B cell (primary cell): ENCODE measurements at regions of chr11 and their contacts with region 1.

Region 1: DNA sequence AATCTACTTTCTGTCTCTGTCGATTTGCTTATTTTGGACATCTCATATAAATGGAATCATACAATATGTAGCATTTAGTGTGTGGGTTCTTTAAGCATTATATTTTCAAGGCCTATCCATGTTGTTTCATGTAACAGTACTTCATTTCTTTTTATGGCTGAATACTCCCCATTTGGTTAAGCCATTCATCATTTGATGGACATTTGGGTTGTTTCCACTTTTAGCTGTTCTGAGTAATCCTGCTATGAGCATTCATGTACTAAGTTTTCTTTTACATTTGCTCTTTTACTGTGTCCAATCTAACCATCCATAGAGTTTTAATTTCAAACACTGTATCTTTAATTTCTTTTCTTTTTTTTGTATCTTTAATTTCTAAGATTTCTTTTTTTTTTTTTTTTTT is 55.6 kb upstream of the SPTBN2 start:
- DNase-seq: no peak
- ATAC-seq: no peak
- H3K4me3 ChIP-seq: no peak overlapping the region
- H3K4me3 Mint-ChIP-seq: no peak overlapping the region
- H3K27ac ChIP-seq: no peak overlapping the region
- H3K27ac Mint-ChIP-seq: no peak overlapping the region
- H3K4me1 ChIP-seq: no peaks in the 10 kb centered on the region
- H3K4me1 Mint-ChIP-seq: peaks cover 2% of the 10 kb centered on the region
- H3K27me3 ChIP-seq: no peaks in the 10 kb centered on the region
- H3K27me3 Mint-ChIP-seq: no peaks in the 10 kb centered on the region
- CTCF ChIP-seq: no peak

Region 2: GRCh38 chr11:66768088-66768521 is 16.5 kb before region 1 on chr11:
- CTCF ChIA-PET with region 1: interaction called, 3 read pairs
- POLR2A ChIA-PET with region 1: no interaction called
- intact Hi-C with region 1: loop called (anchors 1 kb)
- DNase-seq: no peak
- ATAC-seq: no peak
- H3K4me3 ChIP-seq: no peak overlapping the region
- H3K4me3 Mint-ChIP-seq: no peak overlapping the region
- H3K27ac ChIP-seq: no peak overlapping the region
- H3K27ac Mint-ChIP-seq: no peak overlapping the region
- H3K4me1 ChIP-seq: peaks cover 3 to 4% of the 10 kb centered on the region in 2 donors
- H3K4me1 Mint-ChIP-seq: peaks cover 4% of the 10 kb centered on the region
- H3K27me3 ChIP-seq: no peaks in the 10 kb centered on the region
- H3K27me3 Mint-ChIP-seq: no peaks in the 10 kb centered on the region
- CTCF ChIP-seq: no peak

Region 3: GRCh38 chr11:66842896-66843775 is 58.6 kb after region 1 on chr11 and contains the start of gene RCE1:
- CTCF ChIA-PET with region 1: no interaction called
- POLR2A ChIA-PET with region 1: no interaction called
- intact Hi-C with region 1: no loop called
- DNase-seq: peak; percentile 96
- ATAC-seq: peak; percentile 91
- H3K4me3 ChIP-seq: peak within 1 kb of the TSS; percentile 74 to 100 (median 95)
- H3K4me3 Mint-ChIP-seq: peak within 1 kb of the TSS; percentile 90
- H3K27ac ChIP-seq: peak within 1 kb of the TSS; percentile 98 to 99
- H3K27ac Mint-ChIP-seq: peak within 1 kb of the TSS; percentile 94
- H3K4me1 ChIP-seq: peaks cover 28 to 37% of the 10 kb centered on the region in 2 donors
- H3K4me1 Mint-ChIP-seq: peaks cover 43% of the 10 kb centered on the region
- H3K27me3 ChIP-seq: no peaks in the 10 kb centered on the region
- H3K27me3 Mint-ChIP-seq: no peaks in the 10 kb centered on the region
- CTCF ChIP-seq: no peak
- total RNA-seq, gene RCE1: 31.6 and 34.3 TPM in 2 replicates

Region 4: GRCh38 chr11:66868726-66869566 is 84.4 kb after region 1 on chr11:
- CTCF ChIA-PET with region 1: no interaction called
- POLR2A ChIA-PET with region 1: no interaction called
- intact Hi-C with region 1: no loop called
- DNase-seq: peak; percentile 89
- ATAC-seq: peak; percentile 98
- H3K4me3 ChIP-seq: peak overlapping the region in 2 of 5 experiments; percentile 19 to 20
- H3K4me3 Mint-ChIP-seq: peak overlapping the region; percentile 23
- H3K27ac ChIP-seq: no peak overlapping the region
- H3K27ac Mint-ChIP-seq: peak overlapping the region; percentile 39
- H3K4me1 ChIP-seq: peaks cover 4 to 10% of the 10 kb centered on the region in 2 donors
- H3K4me1 Mint-ChIP-seq: peaks cover 16% of the 10 kb centered on the region
- H3K27me3 ChIP-seq: no peaks in the 10 kb centered on the region
- H3K27me3 Mint-ChIP-seq: no peaks in the 10 kb centered on the region
- CTCF ChIP-seq: peak; percentile 89

Region 5: DNA sequence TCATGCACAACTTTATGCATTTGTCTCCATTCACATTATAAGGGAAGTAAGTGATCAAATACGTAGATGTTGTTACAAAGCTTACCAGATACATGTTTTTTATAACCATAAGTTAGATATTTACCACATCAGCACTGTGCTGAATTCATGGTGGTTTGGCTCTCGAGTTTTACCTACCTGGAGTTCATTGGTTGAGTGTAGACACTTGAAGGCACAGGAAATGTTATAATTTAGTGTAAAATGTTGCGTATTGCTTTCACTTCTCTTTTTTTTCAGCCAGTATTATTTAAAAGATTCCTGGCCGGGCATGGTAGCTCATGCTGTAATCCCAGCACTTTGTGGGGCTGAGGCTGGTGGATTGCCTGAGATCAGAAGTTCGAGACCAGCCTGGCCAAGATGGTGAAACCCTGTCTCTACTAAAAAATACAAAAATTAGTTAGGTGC is 428.6 kb after region 1 on chr11:
- CTCF ChIA-PET with region 1: no interaction called
- POLR2A ChIA-PET with region 1: no interaction called
- intact Hi-C with region 1: no loop called
- DNase-seq: peak; percentile 70
- ATAC-seq: peak; percentile 94
- H3K4me3 ChIP-seq: no peak overlapping the region
- H3K4me3 Mint-ChIP-seq: peak overlapping the region; percentile 60
- H3K27ac ChIP-seq: no peak overlapping the region
- H3K27ac Mint-ChIP-seq: peak overlapping the region; percentile 47
- H3K4me1 ChIP-seq: peaks cover 18 to 20% of the 10 kb centered on the region in 2 donors
- H3K4me1 Mint-ChIP-seq: peaks cover 16% of the 10 kb centered on the region
- H3K27me3 ChIP-seq: no peaks in the 10 kb centered on the region
- H3K27me3 Mint-ChIP-seq: no peaks in the 10 kb centered on the region
- CTCF ChIP-seq: no peak